Caco-2 (cell line): ENCODE measurements at regions of chr7 and their contacts with region 1.

Region 1: DNA sequence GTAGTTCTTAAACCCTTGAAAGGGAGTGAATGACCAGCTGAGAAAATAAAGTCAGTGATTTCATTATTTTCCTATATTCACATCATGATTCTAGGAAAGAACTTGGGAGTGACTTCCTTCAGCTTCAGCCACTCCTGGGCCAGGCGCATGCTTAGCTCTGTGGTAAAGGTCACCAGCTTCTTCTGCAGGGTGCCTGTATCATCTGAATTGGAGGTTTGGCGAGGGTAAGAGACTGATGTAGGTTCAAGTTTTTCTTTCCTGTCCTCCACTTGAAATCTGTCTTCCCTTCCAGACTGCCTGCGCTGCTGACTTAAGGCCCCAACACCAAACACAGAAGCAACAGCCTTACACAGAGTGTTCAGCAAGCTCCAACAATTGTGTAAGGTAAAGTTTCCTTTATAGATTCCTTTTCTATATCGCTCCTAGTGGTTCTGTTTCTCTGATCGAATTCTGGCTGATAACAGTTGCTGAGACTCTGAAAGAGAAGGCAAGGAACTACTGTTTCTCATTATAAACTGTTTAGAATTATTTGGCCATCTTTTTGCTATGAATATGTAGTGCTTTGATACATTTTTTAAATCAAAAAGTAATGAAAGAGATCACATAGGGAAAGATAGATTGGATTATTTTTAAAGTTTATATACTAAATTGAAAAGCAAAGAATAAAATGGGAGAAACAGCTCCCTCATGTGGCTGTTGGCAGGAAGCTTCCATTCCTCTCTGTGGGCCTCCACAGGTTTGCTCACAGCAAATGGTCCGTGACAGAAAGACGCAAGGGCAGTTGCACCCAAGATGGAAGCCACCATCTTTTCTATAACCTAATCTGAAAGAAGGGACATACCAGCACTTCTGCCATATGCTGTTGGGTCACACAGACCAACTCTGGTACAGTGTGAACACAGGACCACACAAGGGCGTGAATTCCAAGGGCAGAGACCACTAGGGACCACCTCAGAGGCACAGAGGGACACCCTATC is 14.0 kb downstream of the GATAD1 start:
- DNase-seq: peak in 1 of 2 experiments; percentile 45
- H3K4me3 ChIP-seq: no peak overlapping the region
- H3K4me3 Mint-ChIP-seq: no peak overlapping the region
- H3K27ac Mint-ChIP-seq: no peak overlapping the region
- H3K4me1 ChIP-seq: peaks cover 14% of the 10 kb centered on the region
- H3K4me1 Mint-ChIP-seq: peaks cover 22% of the 10 kb centered on the region
- H3K27me3 ChIP-seq: no peaks in the 10 kb centered on the region
- H3K27me3 Mint-ChIP-seq: no peaks in the 10 kb centered on the region
- CTCF ChIP-seq: peak; percentile 73 to 87

Region 2: GRCh38 chr7:92425321-92425947 is 35.9 kb before region 1 on chr7:
- CTCF ChIA-PET with region 1: interaction called, 13 read pairs
- POLR2A ChIA-PET with region 1: no interaction called
- intact Hi-C with region 1: loop called (anchors 1 kb)
- DNase-seq: peak; percentile 59 to 60
- H3K4me3 ChIP-seq: peak overlapping the region; percentile 50
- H3K4me3 Mint-ChIP-seq: peak overlapping the region; percentile 54
- H3K27ac Mint-ChIP-seq: peak overlapping the region; percentile 74
- H3K4me1 ChIP-seq: no peaks in the 10 kb centered on the region
- H3K4me1 Mint-ChIP-seq: peaks cover 9% of the 10 kb centered on the region
- H3K27me3 ChIP-seq: no peaks in the 10 kb centered on the region; the same call in 1 of the 2 replicates
- H3K27me3 Mint-ChIP-seq: no peaks in the 10 kb centered on the region
- CTCF ChIP-seq: peak in 1 of 2 experiments; percentile 32

Region 3: DNA sequence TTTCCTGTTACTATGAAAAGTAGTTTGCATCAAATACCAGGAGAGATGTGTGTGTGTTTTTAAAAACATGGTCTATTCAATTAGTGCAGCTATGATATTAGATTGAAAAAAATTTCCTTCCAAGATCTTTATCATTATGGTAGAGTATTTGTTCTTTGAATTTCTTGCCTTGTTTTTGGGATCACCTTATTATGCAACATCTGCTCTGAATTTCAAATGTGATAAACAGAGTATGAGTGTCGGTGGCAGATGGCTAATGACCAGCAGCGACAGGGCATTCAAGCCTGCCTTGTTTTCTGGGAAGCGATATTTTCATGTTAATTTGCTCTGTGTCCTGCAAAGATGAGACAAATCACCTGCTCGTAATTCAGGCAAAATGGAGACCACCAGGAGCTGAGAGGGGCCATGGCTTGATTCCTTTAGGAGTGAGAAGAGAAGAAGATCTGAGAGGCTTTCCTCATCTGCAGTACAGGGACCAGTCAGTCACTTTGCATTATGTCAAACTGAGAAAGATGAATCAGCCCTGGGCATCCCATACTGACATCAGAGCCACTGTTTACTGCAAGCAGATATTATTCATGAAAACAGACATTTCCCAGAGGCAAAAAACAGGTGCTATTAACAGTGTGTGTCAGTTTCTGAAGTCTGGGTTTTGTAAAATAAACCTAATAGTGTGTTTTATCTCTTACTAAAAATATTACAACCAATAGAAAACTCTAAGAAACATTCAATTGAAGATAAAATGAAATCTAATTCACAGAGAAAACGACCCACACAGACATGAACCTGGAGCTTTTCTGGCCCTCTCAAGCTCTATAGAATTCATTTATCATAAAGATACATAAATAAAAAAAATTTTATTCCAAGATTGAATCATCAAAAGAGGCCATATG is 307.4 kb after region 1 on chr7:
- CTCF ChIA-PET with region 1: no interaction called
- POLR2A ChIA-PET with region 1: no interaction called
- intact Hi-C with region 1: no loop called
- DNase-seq: no peak
- H3K4me3 ChIP-seq: no peak overlapping the region
- H3K4me3 Mint-ChIP-seq: no peak overlapping the region
- H3K27ac Mint-ChIP-seq: peak overlapping the region; percentile 52
- H3K4me1 ChIP-seq: peaks cover 45% of the 10 kb centered on the region
- H3K4me1 Mint-ChIP-seq: peaks cover 50% of the 10 kb centered on the region
- H3K27me3 ChIP-seq: no peaks in the 10 kb centered on the region
- H3K27me3 Mint-ChIP-seq: no peaks in the 10 kb centered on the region
- CTCF ChIP-seq: no peak